ENCODE measurements at regions of chr6 and their contacts with region 1.

Region 1: DNA sequence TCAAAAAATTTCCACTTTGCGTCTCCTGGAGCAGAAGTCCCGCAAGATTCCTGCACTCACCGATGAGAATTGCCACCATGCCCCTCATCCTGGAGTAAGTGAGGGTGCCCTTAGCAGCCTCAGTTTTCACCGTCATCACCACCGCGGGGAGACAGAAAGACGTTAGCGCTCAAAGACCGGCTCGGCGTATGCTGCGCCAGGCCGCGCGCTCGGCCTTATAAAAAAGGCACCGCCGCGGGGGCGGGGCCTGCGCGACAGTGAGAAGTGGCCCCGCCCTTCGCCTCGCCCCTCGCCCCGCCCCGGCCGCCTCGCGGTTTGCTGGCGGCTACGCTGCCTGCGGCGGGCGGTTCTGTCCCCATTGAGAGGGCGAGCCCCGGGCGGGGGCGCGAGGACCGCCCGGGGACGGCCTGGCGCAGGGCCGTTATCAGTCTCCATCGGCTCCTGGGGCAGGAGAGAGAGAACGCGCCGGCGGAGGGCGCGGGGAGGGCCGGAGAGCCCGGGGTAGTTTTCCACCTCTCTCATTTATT is 122.3 kb upstream of the SLC2A12 start:
- DNase-seq: peak; percentile 98
- ATAC-seq: peak; percentile 91
- H3K4me3 ChIP-seq: peak overlapping the region; percentile 66
- H3K27ac ChIP-seq: peak overlapping the region; percentile 99
- H3K4me1 ChIP-seq: peaks cover 52% of the 10 kb centered on the region
- H3K27me3 ChIP-seq: no peaks in the 10 kb centered on the region
- CTCF ChIP-seq: no peak

Region 2: GRCh38 chr6:134058622-134059366 is 115.9 kb before region 1 on chr6:
- intact Hi-C with region 1: no loop called
- DNase-seq: no peak
- ATAC-seq: no peak
- H3K4me3 ChIP-seq: no peak overlapping the region
- H3K27ac ChIP-seq: no peak overlapping the region
- H3K4me1 ChIP-seq: no peaks in the 10 kb centered on the region
- H3K27me3 ChIP-seq: no peaks in the 10 kb centered on the region
- CTCF ChIP-seq: no peak

Region 3: GRCh38 chr6:134267917-134268361 is 93.2 kb after region 1 on chr6:
- intact Hi-C with region 1: no loop called
- DNase-seq: no peak
- ATAC-seq: no peak
- H3K4me3 ChIP-seq: no peak overlapping the region
- H3K27ac ChIP-seq: no peak overlapping the region
- H3K4me1 ChIP-seq: peaks cover 4% of the 10 kb centered on the region
- H3K27me3 ChIP-seq: no peaks in the 10 kb centered on the region
- CTCF ChIP-seq: no peak

Region 4: DNA sequence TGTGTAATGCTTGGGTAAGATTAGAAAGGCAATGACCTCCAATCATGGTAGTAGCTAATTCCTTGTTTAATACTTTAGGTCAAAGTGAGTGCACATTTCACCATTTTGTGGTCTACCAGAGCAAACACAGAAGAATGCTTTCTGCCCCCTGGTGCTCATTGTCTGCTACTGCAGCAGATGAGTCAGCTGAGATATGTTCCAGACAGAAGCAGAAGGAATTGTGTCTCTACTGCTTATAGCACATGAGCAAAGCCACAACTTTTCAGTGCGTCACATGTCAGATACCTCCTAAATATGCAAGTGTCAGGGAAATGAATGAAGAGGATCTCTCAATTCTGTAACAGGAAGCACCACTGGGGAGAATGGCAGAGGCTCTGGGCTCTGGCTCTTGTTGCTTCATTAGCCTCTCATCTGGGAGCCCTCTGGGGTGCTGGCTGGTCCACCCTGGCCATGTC is 466.3 kb after region 1 on chr6:
- intact Hi-C with region 1: loop called (anchors 10 kb)
- DNase-seq: peak; percentile 69
- ATAC-seq: peak; percentile 97
- H3K4me3 ChIP-seq: no peak overlapping the region
- H3K27ac ChIP-seq: peak overlapping the region; percentile 17
- H3K4me1 ChIP-seq: peaks cover 3% of the 10 kb centered on the region
- H3K27me3 ChIP-seq: no peaks in the 10 kb centered on the region
- CTCF ChIP-seq: peak; percentile 96

Region 5: DNA sequence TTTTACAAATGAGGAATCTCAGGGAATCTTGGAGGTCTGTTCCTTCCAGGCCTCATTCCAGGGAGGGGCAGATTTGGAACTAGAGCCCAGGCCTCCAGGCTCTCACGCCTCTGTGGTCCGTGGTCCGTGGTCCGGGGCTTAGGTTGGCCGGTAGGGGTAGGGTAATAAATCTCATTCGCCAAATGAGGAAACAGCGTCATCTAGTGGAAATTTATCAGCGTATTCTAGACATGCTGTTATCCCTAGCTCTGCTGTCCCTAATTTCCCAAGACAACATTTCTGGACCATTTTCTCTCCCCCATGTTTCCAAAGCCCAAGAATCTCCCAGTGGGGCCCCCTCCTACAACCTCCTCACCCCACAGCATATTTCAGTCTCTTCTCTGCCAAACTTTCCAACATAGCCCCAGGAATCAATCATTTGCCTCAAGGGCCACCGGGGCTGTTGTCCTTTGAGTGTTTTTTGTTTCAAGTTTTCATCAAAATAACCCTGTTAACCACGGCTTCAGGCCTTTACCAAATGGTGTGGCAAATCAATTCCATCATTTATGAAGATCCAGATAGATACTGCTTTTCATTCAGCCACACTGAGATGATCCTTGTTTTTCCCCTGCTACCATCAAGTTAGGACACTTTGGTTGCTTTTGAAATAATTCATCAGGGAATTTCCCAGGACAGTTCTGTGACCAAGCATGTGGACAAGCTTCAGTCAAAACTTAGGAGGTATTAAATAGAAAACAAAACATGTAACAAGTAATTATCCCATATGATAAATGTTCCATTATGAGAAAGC is 648.4 kb after region 1 on chr6:
- intact Hi-C with region 1: loop called (anchors 5 kb)
- DNase-seq: peak; percentile 65
- ATAC-seq: peak; percentile 96
- H3K4me3 ChIP-seq: no peak overlapping the region
- H3K27ac ChIP-seq: no peak overlapping the region
- H3K4me1 ChIP-seq: peaks cover 3% of the 10 kb centered on the region
- H3K27me3 ChIP-seq: no peaks in the 10 kb centered on the region
- CTCF ChIP-seq: peak; percentile 77

Measured in upper lobe of right lung (tissue), 1 donor.